ENCODE measurements at regions of chr9 and their contacts with region 1.

Region 1: DNA sequence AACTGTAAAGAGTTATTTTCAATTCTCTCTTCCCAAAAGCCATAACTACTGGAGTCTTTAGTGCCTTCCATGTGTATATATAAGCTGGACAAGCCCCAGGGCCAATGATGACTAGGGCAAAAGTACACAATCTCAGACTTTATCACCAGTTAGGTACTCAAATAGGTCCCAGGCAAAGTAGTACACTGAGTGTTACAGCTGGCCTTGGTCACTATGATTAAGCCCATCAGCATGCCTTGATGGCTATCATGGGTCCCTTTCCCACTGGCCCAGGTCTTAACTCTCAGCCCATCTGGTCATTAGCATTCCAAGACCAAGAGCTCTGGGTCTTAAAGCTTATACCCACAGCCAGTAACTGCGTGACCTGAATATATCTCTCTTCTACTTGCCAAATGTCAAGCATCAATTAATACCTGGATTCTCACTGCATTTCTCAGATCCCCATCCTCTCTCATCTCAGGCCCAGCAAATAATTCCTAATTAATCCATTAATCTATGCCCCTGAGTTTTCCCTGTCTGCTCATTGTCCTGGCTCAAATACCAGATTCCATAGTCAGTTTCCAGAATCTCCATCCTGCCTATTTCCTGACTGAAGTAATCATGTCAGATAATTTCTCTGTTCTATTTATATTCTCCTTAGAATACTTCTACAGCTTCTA is 62.3 kb downstream of the NR6A1 start:
- DNase-seq: peak; percentile 20
- H3K4me3 ChIP-seq: no peak overlapping the region
- H3K27ac ChIP-seq: no peak overlapping the region
- H3K4me1 ChIP-seq: peaks cover 11% of the 10 kb centered on the region
- H3K27me3 ChIP-seq: no peaks in the 10 kb centered on the region
- CTCF ChIP-seq: no peak

Region 2: DNA sequence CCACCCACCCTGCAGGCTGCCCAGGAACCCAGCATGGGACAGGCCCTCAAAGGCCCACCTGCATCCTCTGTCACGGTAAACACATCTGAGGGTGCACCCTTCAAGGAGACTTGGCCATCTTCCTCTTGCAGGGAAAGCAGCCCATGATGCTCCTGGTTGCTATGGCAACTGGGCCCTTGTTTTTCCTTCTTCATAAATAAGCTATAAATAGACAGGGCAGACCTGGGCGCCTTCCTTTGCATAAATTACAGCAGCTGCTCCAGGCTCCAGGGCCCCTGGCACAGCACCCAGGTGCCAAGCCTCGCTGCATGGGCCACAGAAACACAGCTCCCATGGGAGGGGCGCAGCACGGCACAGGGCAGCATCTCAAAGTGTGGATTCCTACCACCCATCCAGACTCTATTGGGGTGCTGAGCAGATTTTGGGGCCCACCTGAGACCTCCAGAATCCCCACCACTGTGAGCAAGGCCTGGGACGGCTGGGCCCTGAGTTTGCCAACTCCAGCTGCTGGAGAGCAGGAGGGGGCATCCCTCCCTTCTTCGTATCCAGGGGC is 287.7 kb before region 1 on chr9:
- CTCF ChIA-PET with region 1: no interaction called
- dilution Hi-C with region 1: no loop called
- in situ Hi-C with region 1: loop called in 1 of 2 experiments (anchors 25 kb)
- intact Hi-C with region 1: loop called (anchors 1 kb)
- DNase-seq: no peak
- H3K4me3 ChIP-seq: no peak overlapping the region
- H3K27ac ChIP-seq: no peak overlapping the region
- H3K4me1 ChIP-seq: no peaks in the 10 kb centered on the region
- H3K27me3 ChIP-seq: no peaks in the 10 kb centered on the region
- CTCF ChIP-seq: no peak

Region 3: GRCh38 chr9:124551472-124552272 is 157.1 kb before region 1 on chr9:
- CTCF ChIA-PET with region 1: interaction called, 11 read pairs
- dilution Hi-C with region 1: no loop called
- in situ Hi-C with region 1: no loop called
- intact Hi-C with region 1: loop called (anchors 1 kb)
- DNase-seq: peak; percentile 76
- H3K4me3 ChIP-seq: no peak overlapping the region
- H3K27ac ChIP-seq: no peak overlapping the region
- H3K4me1 ChIP-seq: peaks cover 11% of the 10 kb centered on the region
- H3K27me3 ChIP-seq: no peaks in the 10 kb centered on the region
- CTCF ChIP-seq: peak; percentile 76 to 85

Region 4: DNA sequence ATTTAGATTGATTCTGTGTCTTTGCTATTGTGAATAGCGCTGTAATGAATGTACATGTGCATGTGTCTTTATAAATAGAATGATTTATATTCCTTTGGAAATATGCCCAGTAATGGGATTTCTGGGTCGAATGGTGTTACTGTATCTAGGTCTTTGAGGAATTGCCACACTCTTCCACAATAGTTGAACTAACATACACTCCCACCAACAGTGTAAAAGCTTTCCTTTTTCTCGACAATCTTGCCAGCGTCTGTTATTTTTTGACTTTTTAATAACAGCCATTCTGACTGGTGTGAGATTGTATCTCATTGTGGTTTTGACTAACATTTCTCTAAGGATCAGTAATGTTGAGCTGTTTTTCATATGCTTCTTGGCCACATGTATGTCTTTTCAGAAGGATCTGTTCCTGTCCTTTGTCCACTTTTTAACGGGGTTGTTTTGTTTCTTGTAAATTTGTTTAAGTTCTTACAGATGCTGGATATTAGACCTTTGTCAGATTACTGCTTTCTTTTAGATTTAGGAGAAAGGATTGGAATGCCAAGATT is 76.6 kb before region 1 on chr9:
- CTCF ChIA-PET with region 1: no interaction called
- dilution Hi-C with region 1: no loop called
- in situ Hi-C with region 1: no loop called
- intact Hi-C with region 1: no loop called
- DNase-seq: peak; percentile 55
- H3K4me3 ChIP-seq: no peak overlapping the region
- H3K27ac ChIP-seq: no peak overlapping the region
- H3K4me1 ChIP-seq: peaks cover 3% of the 10 kb centered on the region
- H3K27me3 ChIP-seq: no peaks in the 10 kb centered on the region
- CTCF ChIP-seq: no peak

Region 5: DNA sequence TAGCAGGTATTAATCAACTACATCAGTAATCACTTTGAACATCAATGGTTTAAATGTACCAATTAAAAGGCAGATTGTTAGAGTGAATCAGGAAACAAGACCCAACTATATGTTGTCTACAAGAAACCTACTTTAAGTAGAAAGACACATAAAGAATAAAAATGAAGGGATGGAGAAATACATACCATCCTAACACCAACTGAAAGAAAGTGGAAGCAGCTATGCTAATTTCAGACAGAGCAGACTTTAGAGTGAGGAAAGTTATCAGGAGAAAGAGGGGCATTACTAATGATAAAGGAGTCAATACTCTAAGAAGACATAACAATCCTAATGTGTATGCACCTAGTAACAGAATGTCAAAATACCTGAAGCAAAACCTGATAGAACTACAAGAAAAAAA is 63.5 kb before region 1 on chr9:
- CTCF ChIA-PET with region 1: no interaction called
- dilution Hi-C with region 1: loop called (anchors 5 kb)
- in situ Hi-C with region 1: loop called in 1 of 2 experiments (anchors 10 kb)
- intact Hi-C with region 1: no loop called
- DNase-seq: no peak
- H3K4me3 ChIP-seq: no peak overlapping the region
- H3K27ac ChIP-seq: no peak overlapping the region
- H3K4me1 ChIP-seq: no peaks in the 10 kb centered on the region
- H3K27me3 ChIP-seq: no peaks in the 10 kb centered on the region
- CTCF ChIP-seq: no peak

Region 6: GRCh38 chr9:124658165-124659017 is 50.4 kb before region 1 on chr9:
- CTCF ChIA-PET with region 1: no interaction called
- dilution Hi-C with region 1: no loop called
- in situ Hi-C with region 1: loop called in 1 of 2 experiments (anchors 10 kb)
- intact Hi-C with region 1: loop called (anchors 2 kb)
- DNase-seq: peak; percentile 94
- H3K4me3 ChIP-seq: peak overlapping the region; percentile 49 to 95 (median 73)
- H3K27ac ChIP-seq: peak overlapping the region; percentile 95
- H3K4me1 ChIP-seq: peaks cover 17% of the 10 kb centered on the region
- H3K27me3 ChIP-seq: no peaks in the 10 kb centered on the region
- CTCF ChIP-seq: no peak

Region 7: DNA sequence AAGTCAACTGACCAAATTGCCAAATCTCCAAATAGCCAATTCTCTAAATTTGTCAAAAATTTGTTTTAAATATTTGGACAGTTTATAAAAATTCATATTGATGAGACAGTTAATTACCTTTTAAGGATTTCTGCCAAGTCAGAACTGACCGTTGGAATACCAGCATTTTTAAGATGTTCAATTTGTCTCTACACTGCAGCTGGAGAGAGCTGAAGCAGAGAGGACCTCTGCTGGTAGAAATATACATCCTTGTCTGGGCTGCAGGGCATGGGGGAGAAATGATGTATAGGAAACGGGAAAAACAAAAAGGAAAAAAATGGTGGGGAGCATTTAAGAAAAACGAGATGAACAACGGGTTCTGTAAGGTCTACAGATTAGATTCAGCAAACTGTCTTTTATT is 45.5 kb after region 1 on chr9:
- CTCF ChIA-PET with region 1: no interaction called
- dilution Hi-C with region 1: no loop called
- in situ Hi-C with region 1: no loop called
- intact Hi-C with region 1: loop called (anchors 1 kb)
- DNase-seq: no peak
- H3K4me3 ChIP-seq: no peak overlapping the region
- H3K27ac ChIP-seq: no peak overlapping the region
- H3K4me1 ChIP-seq: peaks cover 14% of the 10 kb centered on the region
- H3K27me3 ChIP-seq: no peaks in the 10 kb centered on the region
- CTCF ChIP-seq: peak; percentile 36 to 65

Region 8: GRCh38 chr9:124764774-124765438 is 56.1 kb after region 1 on chr9:
- CTCF ChIA-PET with region 1: interaction called, 3 read pairs
- dilution Hi-C with region 1: no loop called
- in situ Hi-C with region 1: no loop called
- intact Hi-C with region 1: loop called (anchors 1 kb)
- DNase-seq: no peak
- H3K4me3 ChIP-seq: no peak overlapping the region
- H3K27ac ChIP-seq: no peak overlapping the region
- H3K4me1 ChIP-seq: peaks cover 10% of the 10 kb centered on the region
- H3K27me3 ChIP-seq: no peaks in the 10 kb centered on the region
- CTCF ChIP-seq: peak; percentile 45 to 52

Measured in mammary epithelial cell (primary cell).